ENCODE measurements at regions of chr15 and their contacts with region 1.

Region 1: GRCh38 chr15:73633111-73633990 is at the start of gene NPTN:
- DNase-seq: peak; percentile 98
- ATAC-seq: peak; percentile 98
- H3K4me3 Mint-ChIP-seq: peak within 1 kb of the TSS; percentile 80
- H3K27ac Mint-ChIP-seq: peak within 1 kb of the TSS; percentile 69
- H3K4me1 Mint-ChIP-seq: peaks cover 40% of the 10 kb centered on the region
- H3K27me3 Mint-ChIP-seq: peaks cover 14% of the 10 kb centered on the region
- total RNA-seq, gene NPTN: 31.4 to 33.0 TPM

Region 2: GRCh38 chr15:73305331-73306211 is 327.8 kb before region 1 on chr15:
- CTCF ChIA-PET with region 1: interaction called, 19 read pairs
- POLR2A ChIA-PET with region 1: interaction called, 3 read pairs
- DNase-seq: peak; percentile 42
- ATAC-seq: no peak
- H3K4me3 Mint-ChIP-seq: no peak overlapping the region
- H3K27ac Mint-ChIP-seq: no peak overlapping the region
- H3K4me1 Mint-ChIP-seq: peaks cover 5% of the 10 kb centered on the region
- H3K27me3 Mint-ChIP-seq: no peaks in the 10 kb centered on the region

Region 3: GRCh38 chr15:73573572-73573971 is 59.8 kb before region 1 on chr15:
- CTCF ChIA-PET with region 1: interaction called, 47 read pairs
- POLR2A ChIA-PET with region 1: no interaction called
- DNase-seq: no peak
- ATAC-seq: no peak
- H3K4me3 Mint-ChIP-seq: no peak overlapping the region
- H3K27ac Mint-ChIP-seq: no peak overlapping the region
- H3K4me1 Mint-ChIP-seq: peaks cover 23% of the 10 kb centered on the region
- H3K27me3 Mint-ChIP-seq: no peaks in the 10 kb centered on the region

Region 4: GRCh38 chr15:73617301-73617831 is 16.0 kb before region 1 on chr15:
- CTCF ChIA-PET with region 1: interaction called, 155 read pairs
- POLR2A ChIA-PET with region 1: interaction called, 3 read pairs
- DNase-seq: no peak
- ATAC-seq: no peak
- H3K4me3 Mint-ChIP-seq: no peak overlapping the region
- H3K27ac Mint-ChIP-seq: no peak overlapping the region
- H3K4me1 Mint-ChIP-seq: peaks cover 12% of the 10 kb centered on the region
- H3K27me3 Mint-ChIP-seq: no peaks in the 10 kb centered on the region

Region 5: GRCh38 chr15:73683777-73684580 is 50.6 kb after region 1 on chr15 and contains the start of gene CD276:
- CTCF ChIA-PET with region 1: interaction called, 38 read pairs
- POLR2A ChIA-PET with region 1: no interaction called
- DNase-seq: peak; percentile 20
- ATAC-seq: peak; percentile 64
- H3K4me3 Mint-ChIP-seq: no peak within 1 kb of the TSS
- H3K27ac Mint-ChIP-seq: no peak within 1 kb of the TSS
- H3K4me1 Mint-ChIP-seq: peaks cover 11% of the 10 kb centered on the region
- H3K27me3 Mint-ChIP-seq: peaks cover 75% of the 10 kb centered on the region
- total RNA-seq, gene CD276: not detected

Region 6: DNA sequence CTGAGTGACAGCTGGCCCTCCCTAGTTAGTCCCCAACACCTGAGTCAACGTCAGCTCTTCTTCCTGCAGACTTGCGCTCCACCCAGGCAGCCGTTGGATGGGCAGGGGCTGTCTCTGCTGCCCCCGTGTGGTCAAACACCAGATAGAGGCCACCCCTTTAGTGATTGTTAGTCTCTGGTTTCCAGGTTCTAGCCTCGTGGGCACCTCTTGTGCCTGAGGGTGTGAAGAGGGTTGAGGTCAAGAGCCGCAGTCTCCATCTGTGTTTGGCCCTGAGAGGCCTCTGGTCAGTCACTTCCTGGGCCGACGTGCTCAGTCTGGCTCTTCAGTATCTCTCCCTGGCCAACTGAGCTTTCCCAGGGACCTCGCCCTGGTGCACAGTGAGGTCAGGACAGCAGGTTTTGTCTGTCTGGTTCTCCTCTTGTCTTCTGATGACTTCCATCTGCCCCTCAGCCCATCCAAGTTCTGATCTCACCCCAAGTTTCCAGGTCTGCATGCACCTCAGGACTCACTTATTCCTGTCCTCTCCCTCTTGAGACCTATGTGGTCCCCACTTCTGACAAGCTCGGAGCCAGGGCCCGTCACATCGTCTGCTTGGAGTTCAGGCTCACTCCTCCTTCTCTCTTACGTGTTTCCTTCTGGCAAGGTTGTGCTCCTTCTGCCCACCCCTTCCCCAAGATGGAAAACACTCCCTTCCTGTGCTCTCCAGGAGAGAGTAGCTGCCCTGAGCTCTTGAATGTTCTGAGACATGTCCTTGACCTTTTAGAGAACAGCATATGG is 71.7 kb after region 1 on chr15:
- CTCF ChIA-PET with region 1: interaction called, 228 read pairs
- POLR2A ChIA-PET with region 1: no interaction called
- DNase-seq: peak; percentile 79
- ATAC-seq: peak; percentile 82
- H3K4me3 Mint-ChIP-seq: no peak overlapping the region
- H3K27ac Mint-ChIP-seq: no peak overlapping the region
- H3K4me1 Mint-ChIP-seq: peaks cover 2% of the 10 kb centered on the region
- H3K27me3 Mint-ChIP-seq: peaks cover 11% of the 10 kb centered on the region

Region 7: GRCh38 chr15:73800662-73801345 is 167.5 kb after region 1 on chr15:
- CTCF ChIA-PET with region 1: no interaction called
- POLR2A ChIA-PET with region 1: no interaction called
- DNase-seq: no peak
- ATAC-seq: no peak
- H3K4me3 Mint-ChIP-seq: no peak overlapping the region
- H3K27ac Mint-ChIP-seq: no peak overlapping the region
- H3K4me1 Mint-ChIP-seq: peaks cover 10% of the 10 kb centered on the region
- H3K27me3 Mint-ChIP-seq: no peaks in the 10 kb centered on the region

Measured in activated CD8-positive, alpha-beta T cell treated with anti-CD3 and anti-CD28 coated beads, Interleukin-2, amount 10 ng/mL, durations not matched to agents 7 days and 5 days (primary cell).